H1 (cell line): ENCODE measurements at regions of chr2 and their contacts with region 1.

Region 1: GRCh38 chr2:29238497-29238896 is 123.3 kb downstream of the CLIP4 start:
- DNase-seq: peak; percentile 13 to 71
- H3K4me3 ChIP-seq: no peak overlapping the region
- H3K27ac ChIP-seq: no peak overlapping the region
- H3K4me1 ChIP-seq: no peaks in the 10 kb centered on the region
- H3K27me3 ChIP-seq: no peaks in the 10 kb centered on the region
- CTCF ChIP-seq: peak; percentile 80 to 99 (median 94)
- EP300 ChIP-seq: no peak
- POLR2A ChIP-seq: no peak
- RAD21 ChIP-seq: peak; percentile 84 to 86

Region 2: GRCh38 chr2:29223851-29224694 is 14.4 kb before region 1 on chr2:
- CTCF ChIA-PET with region 1: interaction called, 13 read pairs
- POLR2A ChIA-PET with region 1: interaction called, 3 read pairs
- DNase-seq: no peak
- H3K4me3 ChIP-seq: no peak overlapping the region
- H3K27ac ChIP-seq: no peak overlapping the region
- H3K4me1 ChIP-seq: no peaks in the 10 kb centered on the region
- H3K27me3 ChIP-seq: no peaks in the 10 kb centered on the region
- CTCF ChIP-seq: no peak
- EP300 ChIP-seq: no peak
- POLR2A ChIP-seq: no peak
- RAD21 ChIP-seq: no peak

Region 3: GRCh38 chr2:29249666-29250253 is 11.3 kb after region 1 on chr2:
- CTCF ChIA-PET with region 1: interaction called, 13 read pairs
- POLR2A ChIA-PET with region 1: no interaction called
- DNase-seq: no peak
- H3K4me3 ChIP-seq: no peak overlapping the region
- H3K27ac ChIP-seq: no peak overlapping the region
- H3K4me1 ChIP-seq: no peaks in the 10 kb centered on the region; a peak in 1 of 7 replicates
- H3K27me3 ChIP-seq: no peaks in the 10 kb centered on the region
- CTCF ChIP-seq: no peak
- EP300 ChIP-seq: no peak
- POLR2A ChIP-seq: no peak
- RAD21 ChIP-seq: no peak

Region 4: DNA sequence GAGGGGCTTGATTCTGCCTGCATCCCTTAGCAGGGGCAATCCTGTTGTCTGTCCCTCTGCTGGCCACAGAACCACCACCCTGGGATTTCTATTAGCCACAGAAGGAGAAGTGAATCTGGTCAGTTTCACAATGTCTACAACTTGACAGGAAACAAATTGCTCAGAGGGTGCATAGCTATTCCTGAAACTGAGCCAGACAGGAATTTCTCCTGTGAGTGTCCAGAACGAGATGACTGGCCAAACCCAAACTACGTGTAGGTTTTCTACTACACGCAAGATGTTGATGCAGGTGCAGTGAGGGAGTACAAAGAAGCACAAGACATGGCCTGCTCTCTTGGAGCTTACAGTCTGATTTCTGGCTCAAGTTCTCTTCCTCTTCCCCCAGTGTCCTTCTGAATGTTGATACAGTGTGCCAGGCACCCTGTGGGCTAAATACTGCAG is 78.6 kb after region 1 on chr2:
- CTCF ChIA-PET with region 1: interaction called, 10 read pairs
- POLR2A ChIA-PET with region 1: no interaction called
- DNase-seq: no peak
- H3K4me3 ChIP-seq: no peak overlapping the region
- H3K27ac ChIP-seq: no peak overlapping the region
- H3K4me1 ChIP-seq: 0 out of 7 replicates have a peak, but pooled peaks cover 0 to 2% (median 0%) of the 10 kb centered on the region in 4 experiments
- H3K27me3 ChIP-seq: no peaks in the 10 kb centered on the region
- CTCF ChIP-seq: no peak
- EP300 ChIP-seq: no peak
- POLR2A ChIP-seq: no peak
- RAD21 ChIP-seq: no peak